CD8-positive, alpha-beta T cell (primary cell): ENCODE measurements at regions of chr17 and their contacts with region 1.

Region 1: GRCh38 chr17:31216053-31216751 is 80.8 kb downstream of the OMG start:
- DNase-seq: peak in 2 of 9 experiments; percentile 43 to 61
- ATAC-seq: no peak
- H3K4me3 ChIP-seq: no peak overlapping the region
- H3K4me3 Mint-ChIP-seq: no peak overlapping the region
- H3K27ac ChIP-seq: no peak overlapping the region
- H3K27ac Mint-ChIP-seq: no peak overlapping the region
- H3K4me1 ChIP-seq: no peaks in the 10 kb centered on the region
- H3K4me1 Mint-ChIP-seq: no peaks in the 10 kb centered on the region
- H3K27me3 ChIP-seq: no peaks in the 10 kb centered on the region
- H3K27me3 Mint-ChIP-seq: no peaks in the 10 kb centered on the region
- CTCF ChIP-seq: peak; percentile 65

Region 2: GRCh38 chr17:31008374-31009041 is 207.7 kb before region 1 on chr17:
- CTCF ChIA-PET with region 1: interaction called, 14 read pairs
- POLR2A ChIA-PET with region 1: no interaction called
- intact Hi-C with region 1: loop called (anchors 1 kb)
- DNase-seq: peak in 8 of 9 experiments; percentile 37 to 76 (median 54)
- ATAC-seq: peak; percentile 69
- H3K4me3 ChIP-seq: peak overlapping the region; percentile 61 to 70
- H3K4me3 Mint-ChIP-seq: peak overlapping the region; percentile 90
- H3K27ac ChIP-seq: peak overlapping the region; percentile 47 to 49
- H3K27ac Mint-ChIP-seq: peak overlapping the region; percentile 78
- H3K4me1 ChIP-seq: peaks cover 6% of the 10 kb centered on the region
- H3K4me1 Mint-ChIP-seq: peaks cover 15% of the 10 kb centered on the region
- H3K27me3 ChIP-seq: no peaks in the 10 kb centered on the region
- H3K27me3 Mint-ChIP-seq: peaks cover 14% of the 10 kb centered on the region
- CTCF ChIP-seq: no peak

Region 3: DNA sequence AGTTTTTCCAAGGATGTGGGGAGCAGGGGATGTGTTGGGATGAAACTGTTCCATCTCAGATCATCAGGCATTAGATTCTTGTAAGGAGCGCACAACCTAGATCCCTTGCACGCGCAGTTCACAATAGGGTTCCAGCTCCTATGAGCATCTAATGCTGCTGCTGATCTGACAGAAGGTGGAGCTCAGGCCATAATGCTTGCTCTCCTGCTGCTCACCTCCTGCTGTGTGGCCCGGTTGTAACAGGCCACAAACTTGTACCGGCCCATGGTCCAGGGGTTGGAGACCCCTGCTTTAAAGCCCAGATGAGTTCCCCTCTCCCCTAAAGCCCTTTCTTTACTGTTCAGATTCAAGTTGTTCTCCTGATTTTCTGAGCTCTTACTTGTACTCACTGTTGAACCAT is 200.6 kb before region 1 on chr17:
- CTCF ChIA-PET with region 1: interaction called, 14 read pairs
- POLR2A ChIA-PET with region 1: no interaction called
- intact Hi-C with region 1: loop called (anchors 1 kb)
- DNase-seq: no peak
- ATAC-seq: no peak
- H3K4me3 ChIP-seq: no peak overlapping the region
- H3K4me3 Mint-ChIP-seq: no peak overlapping the region
- H3K27ac ChIP-seq: no peak overlapping the region
- H3K27ac Mint-ChIP-seq: no peak overlapping the region
- H3K4me1 ChIP-seq: no peaks in the 10 kb centered on the region
- H3K4me1 Mint-ChIP-seq: no peaks in the 10 kb centered on the region
- H3K27me3 ChIP-seq: no peaks in the 10 kb centered on the region
- H3K27me3 Mint-ChIP-seq: peaks cover 2% of the 10 kb centered on the region
- CTCF ChIP-seq: no peak

Region 4: DNA sequence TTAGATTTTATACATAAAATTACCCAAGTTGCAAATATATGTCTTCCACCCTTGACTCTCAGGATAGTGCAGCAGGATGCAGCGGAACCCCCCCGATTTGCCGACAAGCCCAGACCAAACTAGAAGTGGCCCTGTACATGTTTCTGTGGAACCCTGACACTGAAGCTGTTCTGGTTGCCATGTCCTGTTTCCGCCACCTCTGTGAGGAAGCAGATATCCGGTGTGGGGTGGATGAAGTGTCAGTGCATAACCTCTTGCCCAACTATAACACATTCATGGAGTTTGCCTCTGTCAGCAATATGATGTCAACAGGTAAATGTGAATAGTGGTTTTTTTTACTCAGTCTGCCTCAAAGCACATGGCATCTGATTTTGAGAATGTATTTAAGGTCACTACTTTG is 10.2 kb after region 1 on chr17:
- CTCF ChIA-PET with region 1: interaction called, 10 read pairs
- POLR2A ChIA-PET with region 1: no interaction called
- intact Hi-C with region 1: no loop called
- DNase-seq: peak in 1 of 9 experiments; percentile 12
- ATAC-seq: no peak
- H3K4me3 ChIP-seq: no peak overlapping the region
- H3K4me3 Mint-ChIP-seq: no peak overlapping the region
- H3K27ac ChIP-seq: no peak overlapping the region
- H3K27ac Mint-ChIP-seq: no peak overlapping the region
- H3K4me1 ChIP-seq: no peaks in the 10 kb centered on the region
- H3K4me1 Mint-ChIP-seq: peaks cover 5% of the 10 kb centered on the region
- H3K27me3 ChIP-seq: no peaks in the 10 kb centered on the region
- H3K27me3 Mint-ChIP-seq: no peaks in the 10 kb centered on the region
- CTCF ChIP-seq: no peak

Region 5: DNA sequence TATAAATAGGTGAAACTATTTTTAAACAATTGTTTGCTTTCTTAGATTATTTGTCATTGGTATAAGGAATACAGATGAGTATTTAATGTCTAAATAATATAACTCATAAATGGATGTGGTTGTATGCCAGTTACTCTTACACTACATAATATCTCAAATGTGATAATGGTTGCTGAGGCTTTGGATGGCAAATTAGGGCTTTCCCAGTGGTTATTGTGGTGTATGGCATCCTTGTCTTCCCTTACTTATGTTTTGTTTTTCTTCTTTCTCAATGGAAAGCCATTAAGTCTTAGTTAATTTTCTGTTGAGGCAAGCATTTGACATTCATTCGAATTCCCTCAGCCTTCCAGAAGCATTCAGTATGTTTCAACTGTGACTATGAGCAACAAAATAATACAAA is 70.4 kb after region 1 on chr17:
- CTCF ChIA-PET with region 1: no interaction called
- POLR2A ChIA-PET with region 1: no interaction called
- intact Hi-C with region 1: no loop called
- DNase-seq: no peak
- ATAC-seq: no peak
- H3K4me3 ChIP-seq: no peak overlapping the region
- H3K4me3 Mint-ChIP-seq: no peak overlapping the region
- H3K27ac ChIP-seq: no peak overlapping the region
- H3K27ac Mint-ChIP-seq: no peak overlapping the region
- H3K4me1 ChIP-seq: peaks cover 8% of the 10 kb centered on the region
- H3K4me1 Mint-ChIP-seq: peaks cover 21% of the 10 kb centered on the region
- H3K27me3 ChIP-seq: no peaks in the 10 kb centered on the region
- H3K27me3 Mint-ChIP-seq: no peaks in the 10 kb centered on the region
- CTCF ChIP-seq: no peak

Region 6: DNA sequence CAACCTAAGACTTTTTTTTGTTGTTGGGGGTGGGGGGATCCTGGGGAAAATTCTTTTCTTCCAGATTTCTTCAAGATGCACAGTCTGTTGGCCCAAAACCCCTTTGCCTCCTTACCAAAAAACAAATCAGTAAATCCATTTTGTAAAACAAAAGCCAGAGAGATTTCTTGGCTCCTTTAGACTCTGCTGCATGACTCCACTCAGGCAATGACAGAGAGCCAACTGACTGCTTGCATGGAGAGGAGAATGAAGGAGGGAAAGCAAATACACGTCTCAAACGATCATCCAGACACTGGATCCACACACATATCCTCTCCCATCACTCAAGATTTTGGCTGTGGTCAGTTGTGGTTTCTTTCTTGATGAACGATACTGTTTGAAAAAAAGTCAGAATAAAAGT is 629.1 kb after region 1 on chr17:
- CTCF ChIA-PET with region 1: no interaction called
- POLR2A ChIA-PET with region 1: no interaction called
- intact Hi-C with region 1: no loop called
- DNase-seq: no peak
- ATAC-seq: no peak
- H3K4me3 ChIP-seq: no peak overlapping the region
- H3K4me3 Mint-ChIP-seq: no peak overlapping the region
- H3K27ac ChIP-seq: no peak overlapping the region
- H3K27ac Mint-ChIP-seq: no peak overlapping the region
- H3K4me1 ChIP-seq: no peaks in the 10 kb centered on the region
- H3K4me1 Mint-ChIP-seq: no peaks in the 10 kb centered on the region
- H3K27me3 ChIP-seq: peaks cover 0 to 6% of the 10 kb centered on the region in 2 experiments
- H3K27me3 Mint-ChIP-seq: peaks cover under 1% of the 10 kb centered on the region
- CTCF ChIP-seq: no peak